ENCODE measurements at regions of chr12 and their contacts with region 1.

Region 1: GRCh38 chr12:3777206-3777809 is 24.4 kb upstream of the CRACR2A start:
- DNase-seq: peak; percentile 53
- H3K4me3 ChIP-seq: no peak overlapping the region
- H3K27ac ChIP-seq: no peak overlapping the region
- H3K4me1 ChIP-seq: no peaks in the 10 kb centered on the region
- H3K27me3 ChIP-seq: no peaks in the 10 kb centered on the region
- CTCF ChIP-seq: peak in 3 of 4 experiments; percentile 71 to 84 (median 73)
- POLR2A ChIP-seq: no peak

Region 2: GRCh38 chr12:3299929-3300832 is 477.1 kb before region 1 on chr12:
- intact Hi-C with region 1: loop called (anchors 2 kb)
- DNase-seq: peak; percentile 94
- H3K4me3 ChIP-seq: no peak overlapping the region
- H3K27ac ChIP-seq: peak overlapping the region; percentile 75 to 78
- H3K4me1 ChIP-seq: no peaks in the 10 kb centered on the region
- H3K27me3 ChIP-seq: no peaks in the 10 kb centered on the region
- CTCF ChIP-seq: peak; percentile 74 to 97 (median 96)
- POLR2A ChIP-seq: no peak

Region 3: DNA sequence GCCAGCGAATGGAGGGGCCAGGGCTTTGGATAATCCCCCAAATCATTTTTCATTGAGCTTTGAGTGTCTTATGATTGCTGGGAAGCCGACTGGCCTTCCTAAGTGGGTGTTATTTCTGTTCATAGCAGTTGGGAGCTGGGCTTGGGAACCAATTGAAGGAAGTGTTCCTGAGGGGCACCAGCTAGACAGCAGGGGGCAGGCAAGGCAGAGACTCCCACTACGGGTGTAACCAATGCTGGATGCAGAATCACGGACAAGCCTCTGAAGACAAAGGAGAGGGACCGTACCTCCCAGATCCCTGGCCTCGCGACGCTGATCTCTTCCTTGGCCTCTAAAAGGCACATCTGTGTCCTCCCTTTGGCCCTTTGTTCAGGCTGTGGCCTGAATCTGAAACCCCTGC is 435.3 kb before region 1 on chr12:
- intact Hi-C with region 1: loop called (anchors 5 kb)
- DNase-seq: peak; percentile 17
- H3K4me3 ChIP-seq: no peak overlapping the region
- H3K27ac ChIP-seq: no peak overlapping the region
- H3K4me1 ChIP-seq: no peaks in the 10 kb centered on the region
- H3K27me3 ChIP-seq: no peaks in the 10 kb centered on the region
- CTCF ChIP-seq: peak in 2 of 4 experiments; percentile 33 to 37
- POLR2A ChIP-seq: no peak

Region 4: DNA sequence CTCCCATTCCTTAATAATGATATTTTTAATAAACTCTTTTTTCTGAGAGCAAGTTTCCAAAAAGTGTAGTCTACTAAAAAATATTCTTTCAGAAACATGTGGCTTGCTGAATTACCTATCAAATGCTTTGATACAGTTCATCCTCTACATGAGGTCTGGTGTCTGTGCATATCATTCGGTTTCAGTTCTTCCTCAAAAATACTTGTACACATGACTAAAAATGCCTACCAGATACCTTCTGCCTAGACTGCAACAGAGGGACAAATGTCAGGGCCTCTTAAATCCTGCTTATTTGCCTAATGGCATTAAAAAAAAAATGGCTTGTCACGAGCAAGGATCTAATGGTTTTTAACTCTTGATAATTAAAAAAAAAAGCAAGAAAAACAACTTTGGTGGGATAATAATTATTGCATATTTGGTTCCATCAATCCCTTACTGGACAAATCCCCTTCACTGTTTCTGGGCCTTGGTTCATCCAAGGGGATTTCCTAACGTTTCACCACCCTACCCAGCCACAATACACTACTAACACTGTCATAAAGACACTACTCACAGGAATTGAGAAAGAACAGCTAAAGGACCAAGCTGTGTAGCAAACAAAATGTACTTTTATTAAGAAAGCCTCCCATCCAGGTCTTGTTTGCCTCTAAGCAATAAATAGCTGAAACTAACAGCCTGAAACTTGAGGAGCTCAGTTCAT is 50.1 kb after region 1 on chr12:
- intact Hi-C with region 1: no loop called
- DNase-seq: no peak
- H3K4me3 ChIP-seq: no peak overlapping the region
- H3K27ac ChIP-seq: no peak overlapping the region
- H3K4me1 ChIP-seq: no peaks in the 10 kb centered on the region
- H3K27me3 ChIP-seq: no peaks in the 10 kb centered on the region
- CTCF ChIP-seq: no peak
- POLR2A ChIP-seq: no peak

Region 5: GRCh38 chr12:4027412-4027811 is 250.1 kb after region 1 on chr12:
- intact Hi-C with region 1: no loop called
- DNase-seq: no peak
- H3K4me3 ChIP-seq: no peak overlapping the region
- H3K27ac ChIP-seq: no peak overlapping the region
- H3K4me1 ChIP-seq: no peaks in the 10 kb centered on the region
- H3K27me3 ChIP-seq: no peaks in the 10 kb centered on the region
- CTCF ChIP-seq: no peak
- POLR2A ChIP-seq: no peak

Measured in prostate gland (tissue), 2 donors.